Posterior cingulate gyrus (tissue), 11 donors: ENCODE measurements at regions of chr1 and their contacts with region 1.

Region 1: GRCh38 chr1:230858918-230859729 is 9.2 kb downstream of the C1orf198 start:
- DNase-seq: peak; percentile 76 to 97 (median 80)

Region 2: GRCh38 chr1:230807029-230807428 is 52.1 kb before region 1 on chr1:
- intact Hi-C with region 1: loop called (anchors 1 kb)
- DNase-seq: peak; percentile 91 to 99 (median 96)

Region 3: DNA sequence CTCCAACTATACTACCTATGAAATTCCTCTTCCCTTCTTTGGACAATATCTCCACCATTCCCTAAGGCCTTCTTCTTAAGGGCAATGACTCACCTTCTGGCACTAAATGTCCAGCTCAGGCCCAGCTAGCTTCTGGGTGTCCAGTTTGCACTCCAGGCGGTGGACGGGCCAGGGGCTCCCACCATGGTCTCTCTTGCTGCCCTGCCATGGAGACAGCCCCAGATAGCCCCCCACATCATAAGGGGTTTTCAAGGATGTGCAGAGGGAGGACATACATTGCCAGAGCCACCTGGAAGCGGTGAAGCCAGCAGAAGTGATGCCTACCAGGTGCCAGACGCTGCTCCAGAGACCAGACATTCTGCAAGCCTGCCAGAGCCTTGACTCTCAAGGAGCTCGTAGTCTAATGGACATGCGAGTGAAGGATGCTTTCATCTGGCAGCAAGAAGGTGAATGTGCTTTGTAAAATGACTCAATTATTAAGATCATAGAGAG is 34.5 kb before region 1 on chr1:
- intact Hi-C with region 1: loop called (anchors 5 kb)
- DNase-seq: peak in 1 of 10 donors; percentile 65